Right ventricle myocardium inferior (tissue), 1 donor: ENCODE measurements at regions of chr9 and their contacts with region 1.

Region 1: DNA sequence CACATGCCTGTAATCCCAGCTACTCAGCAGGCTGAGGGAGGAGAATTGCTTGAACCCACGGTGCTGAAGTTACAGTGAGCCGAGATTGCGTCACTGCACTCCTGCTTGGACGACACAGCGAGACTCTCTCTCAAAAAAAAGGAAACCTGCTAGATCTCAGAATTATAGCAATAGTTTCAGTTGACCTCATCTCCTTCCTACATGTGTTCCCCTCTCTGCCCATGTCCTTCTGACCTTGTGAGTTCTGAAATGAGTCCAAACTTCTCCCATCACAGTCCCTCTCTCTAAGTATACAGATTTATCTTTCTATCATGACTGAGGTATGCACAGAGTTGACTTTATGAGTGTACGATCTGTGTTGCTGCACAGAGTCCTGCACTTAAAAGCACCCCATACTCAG is 44.7 kb upstream of the SHOC1 start:
- DNase-seq: peak; percentile 70
- ATAC-seq: no peak

Region 2: GRCh38 chr9:112061152-112061740 is 221.9 kb after region 1 on chr9:
- intact Hi-C with region 1: loop called (anchors 10 kb)
- DNase-seq: peak; percentile 87
- ATAC-seq: peak; percentile 82